ENCODE measurements at regions of chr3 and their contacts with region 1.

Region 1: GRCh38 chr3:168847291-168847883 is 751.7 kb upstream of the GOLIM4 start:
- DNase-seq: no peak
- H3K4me3 ChIP-seq: no peak overlapping the region
- H3K27ac ChIP-seq: no peak overlapping the region
- H3K4me1 ChIP-seq: peaks cover 0 to 2% (median 0%) of the 10 kb centered on the region in 4 experiments; a peak in 3 of 7 replicates
- H3K27me3 ChIP-seq: no peaks in the 10 kb centered on the region
- CTCF ChIP-seq: peak in 2 of 3 experiments; percentile 57 to 59; a peak in 3 of 4 replicates
- EP300 ChIP-seq: no peak
- POLR2A ChIP-seq: no peak
- RAD21 ChIP-seq: peak; percentile 92 to 95

Region 2: GRCh38 chr3:168213920-168214319 is 633.5 kb before region 1 on chr3:
- CTCF ChIA-PET with region 1: interaction called, 39 read pairs
- POLR2A ChIA-PET with region 1: no interaction called
- DNase-seq: no peak
- H3K4me3 ChIP-seq: no peak overlapping the region
- H3K27ac ChIP-seq: no peak overlapping the region
- H3K4me1 ChIP-seq: no peaks in the 10 kb centered on the region
- H3K27me3 ChIP-seq: no peaks in the 10 kb centered on the region
- CTCF ChIP-seq: no peak
- EP300 ChIP-seq: no peak
- POLR2A ChIP-seq: no peak
- RAD21 ChIP-seq: no peak

Region 3: DNA sequence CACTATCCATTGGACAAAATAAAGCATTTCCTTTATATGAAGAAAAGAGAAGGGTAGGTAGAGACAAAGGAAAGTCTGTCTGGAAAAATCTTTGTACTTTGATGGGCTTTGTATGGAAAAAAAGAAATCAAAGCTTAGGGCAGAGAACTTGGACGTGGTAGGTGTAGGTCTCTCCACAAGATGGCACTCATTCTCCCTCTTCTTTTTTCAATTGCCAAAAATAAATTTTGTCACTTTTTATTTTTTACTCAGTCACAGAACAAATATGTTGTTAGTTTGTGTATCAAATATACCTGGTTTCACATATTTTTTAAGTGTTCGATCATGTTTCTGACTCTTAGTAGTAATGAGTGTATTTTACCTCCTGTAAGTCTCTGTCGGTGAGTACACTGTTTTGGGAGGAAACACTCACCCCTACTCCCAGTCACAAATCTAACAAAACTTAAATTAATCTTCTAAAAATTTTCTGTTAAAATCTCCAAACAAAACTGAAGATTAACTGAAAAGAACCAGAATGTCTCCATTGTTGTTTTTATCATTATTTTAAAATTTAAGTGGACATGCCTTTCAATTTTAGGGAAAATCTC is 335.9 kb before region 1 on chr3:
- CTCF ChIA-PET with region 1: interaction called, 17 read pairs
- POLR2A ChIA-PET with region 1: no interaction called
- DNase-seq: no peak
- H3K4me3 ChIP-seq: no peak overlapping the region
- H3K27ac ChIP-seq: no peak overlapping the region
- H3K4me1 ChIP-seq: peaks cover 2 to 7% (median 5%) of the 10 kb centered on the region in 4 experiments; a peak in 2 of 7 replicates
- H3K27me3 ChIP-seq: no peaks in the 10 kb centered on the region
- CTCF ChIP-seq: peak in 2 of 3 experiments; percentile 47 to 58; a peak in 2 of 4 replicates
- EP300 ChIP-seq: no peak
- POLR2A ChIP-seq: no peak
- RAD21 ChIP-seq: peak; percentile 70 to 72

Region 4: DNA sequence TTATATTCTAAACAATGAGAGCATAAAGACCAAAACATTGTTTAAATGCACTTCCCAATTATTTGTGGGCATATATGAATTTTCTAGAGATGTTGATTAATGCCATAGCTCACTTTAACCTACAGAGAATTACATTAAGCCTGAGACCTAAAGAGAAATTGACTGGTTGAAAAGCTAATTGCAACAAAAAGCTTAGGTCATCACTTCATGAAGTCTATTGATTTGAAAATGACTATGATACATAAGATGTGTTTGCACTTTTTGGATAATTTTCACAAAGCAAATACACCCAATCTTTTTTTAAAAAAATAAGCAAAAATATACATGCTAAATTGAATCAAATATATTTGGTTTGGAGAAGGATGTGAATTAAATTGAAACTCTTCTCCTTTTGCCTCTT is 218.8 kb before region 1 on chr3:
- CTCF ChIA-PET with region 1: interaction called, 48 read pairs
- POLR2A ChIA-PET with region 1: no interaction called
- DNase-seq: no peak
- H3K4me3 ChIP-seq: no peak overlapping the region
- H3K27ac ChIP-seq: no peak overlapping the region
- H3K4me1 ChIP-seq: peaks cover 0 to 4% (median 0%) of the 10 kb centered on the region in 4 experiments; a peak in 1 of 7 replicates
- H3K27me3 ChIP-seq: no peaks in the 10 kb centered on the region
- CTCF ChIP-seq: no peak
- EP300 ChIP-seq: no peak
- POLR2A ChIP-seq: no peak
- RAD21 ChIP-seq: no peak

Region 5: GRCh38 chr3:168693870-168694269 is 153.5 kb before region 1 on chr3:
- CTCF ChIA-PET with region 1: interaction called, 12 read pairs
- POLR2A ChIA-PET with region 1: no interaction called
- DNase-seq: no peak
- H3K4me3 ChIP-seq: peak overlapping the region in 1 of 4 experiments; percentile 5; a peak in 1 of 8 replicates
- H3K27ac ChIP-seq: no peak overlapping the region
- H3K4me1 ChIP-seq: peaks cover 0 to 5% (median 2%) of the 10 kb centered on the region in 4 experiments; a peak in 2 of 7 replicates
- H3K27me3 ChIP-seq: no peaks in the 10 kb centered on the region
- CTCF ChIP-seq: no peak
- EP300 ChIP-seq: no peak
- POLR2A ChIP-seq: no peak
- RAD21 ChIP-seq: no peak

Region 6: GRCh38 chr3:168865022-168865551 is 17.7 kb after region 1 on chr3:
- CTCF ChIA-PET with region 1: interaction called, 14 read pairs
- POLR2A ChIA-PET with region 1: no interaction called
- DNase-seq: no peak
- H3K4me3 ChIP-seq: no peak overlapping the region
- H3K27ac ChIP-seq: no peak overlapping the region
- H3K4me1 ChIP-seq: no peaks in the 10 kb centered on the region
- H3K27me3 ChIP-seq: no peaks in the 10 kb centered on the region
- CTCF ChIP-seq: peak in 2 of 3 experiments; percentile 22 to 57; a peak in 2 of 4 replicates
- EP300 ChIP-seq: no peak
- POLR2A ChIP-seq: no peak
- RAD21 ChIP-seq: peak in 1 of 2 experiments; percentile 66